Activated naive CD4-positive, alpha-beta T cell treated with anti-CD3 and anti-CD28 coated beads, Interleukin-2, amount 10 ng/mL, durations not matched to agents 7 days and 5 days (primary cell): ENCODE measurements at regions of chr3 and their contacts with region 1.

Region 1: DNA sequence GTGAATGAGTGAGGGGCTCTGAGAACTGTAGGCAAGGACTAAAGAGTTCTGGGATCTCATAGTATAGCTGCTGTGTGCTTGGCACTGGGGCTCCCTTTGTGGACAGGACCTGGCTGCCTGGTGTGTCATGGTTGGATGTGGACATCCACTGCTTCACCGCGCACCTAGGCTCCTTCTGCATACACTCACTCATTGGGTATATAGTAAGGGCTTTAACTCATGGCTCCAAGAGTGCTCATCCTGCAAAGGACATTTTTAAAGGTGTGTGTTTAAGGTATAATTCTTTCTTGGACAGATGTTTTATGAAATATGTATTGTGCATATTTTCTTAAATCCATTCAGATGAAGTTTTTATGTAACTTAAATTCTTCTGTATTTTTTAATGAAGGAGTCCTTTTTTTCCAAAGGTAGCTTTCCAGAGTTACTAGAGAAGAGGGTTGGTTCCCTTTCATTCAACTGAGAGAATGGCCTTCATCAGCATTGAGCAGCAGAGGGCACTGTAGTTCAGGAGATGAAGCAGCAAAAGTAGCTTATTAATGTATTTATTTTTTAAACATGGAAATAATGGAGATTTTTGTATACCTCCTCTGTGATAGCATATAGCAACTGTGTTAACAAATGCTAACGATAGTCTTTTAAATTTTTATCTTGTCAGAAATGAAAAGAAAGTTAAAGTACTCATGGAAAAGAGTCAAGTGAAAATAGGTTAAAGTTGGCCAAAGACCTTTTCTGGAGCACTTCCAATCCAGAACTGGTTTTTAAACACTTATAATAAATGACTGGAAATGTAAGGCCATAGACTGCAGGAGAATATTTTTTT is 25.2 kb downstream of the OXNAD1 start:
- DNase-seq: peak; percentile 80
- H3K4me3 Mint-ChIP-seq: peak overlapping the region; percentile 92
- H3K27ac Mint-ChIP-seq: peak overlapping the region; percentile 97
- H3K4me1 Mint-ChIP-seq: peaks cover 68% of the 10 kb centered on the region
- H3K27me3 Mint-ChIP-seq: no peaks in the 10 kb centered on the region

Region 2: GRCh38 chr3:16140116-16140893 is 149.9 kb before region 1 on chr3:
- CTCF ChIA-PET with region 1: no interaction called
- DNase-seq: no peak
- H3K4me3 Mint-ChIP-seq: no peak overlapping the region
- H3K27ac Mint-ChIP-seq: no peak overlapping the region
- H3K4me1 Mint-ChIP-seq: no peaks in the 10 kb centered on the region
- H3K27me3 Mint-ChIP-seq: peaks cover 9% of the 10 kb centered on the region

Region 3: GRCh38 chr3:16264708-16265454 is 25.3 kb before region 1 on chr3 and contains the starts of genes DPH3 and OXNAD1:
- CTCF ChIA-PET with region 1: interaction called, 21 read pairs
- DNase-seq: peak; percentile 99
- H3K4me3 Mint-ChIP-seq: peak within 1 kb of the TSS; percentile 97
- H3K27ac Mint-ChIP-seq: peak within 1 kb of the TSS; percentile 96
- H3K4me1 Mint-ChIP-seq: peaks cover 39% of the 10 kb centered on the region
- H3K27me3 Mint-ChIP-seq: no peaks in the 10 kb centered on the region

Region 4: GRCh38 chr3:16300881-16301359 is 10.7 kb after region 1 on chr3:
- CTCF ChIA-PET with region 1: interaction called, 53 read pairs
- DNase-seq: peak; percentile 73
- H3K4me3 Mint-ChIP-seq: peak overlapping the region; percentile 83
- H3K27ac Mint-ChIP-seq: peak overlapping the region; percentile 96
- H3K4me1 Mint-ChIP-seq: peaks cover 98% of the 10 kb centered on the region
- H3K27me3 Mint-ChIP-seq: no peaks in the 10 kb centered on the region

Region 5: DNA sequence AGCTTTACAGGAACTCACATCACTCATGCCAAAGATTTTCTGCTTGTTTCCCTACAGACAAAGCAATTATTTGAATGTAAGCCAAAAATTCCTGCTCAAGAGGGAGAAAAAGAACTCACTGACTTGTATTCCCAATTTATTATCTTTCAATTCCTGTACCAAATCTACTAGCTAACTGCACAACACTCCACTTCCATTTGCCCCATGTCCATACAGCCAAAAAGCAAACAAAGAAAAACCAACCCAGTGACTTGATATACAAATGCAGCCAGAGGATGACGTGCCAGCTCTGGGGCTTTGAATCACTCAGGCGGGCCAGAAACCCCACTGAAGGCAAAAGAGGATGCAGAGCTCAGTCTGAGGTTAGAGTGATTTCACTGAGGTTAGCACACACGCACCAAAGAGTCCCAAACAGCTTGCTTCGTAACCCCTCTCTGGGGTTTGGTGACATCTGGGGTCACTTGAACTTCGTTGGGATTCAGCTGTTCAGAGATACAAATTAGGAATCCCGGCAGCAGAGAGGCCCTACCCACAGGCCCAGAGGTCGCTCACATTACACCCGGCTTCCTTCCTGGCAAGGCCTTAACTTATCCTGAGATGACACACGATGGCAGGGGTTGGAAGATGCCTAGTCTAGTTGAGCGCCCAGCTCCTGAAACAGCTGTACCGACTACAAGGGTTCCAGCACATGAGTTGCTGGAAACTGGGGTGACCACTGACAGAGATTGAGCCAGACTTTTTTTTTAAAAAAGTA is 221.6 kb after region 1 on chr3:
- CTCF ChIA-PET with region 1: interaction called, 16 read pairs
- DNase-seq: peak; percentile 82
- H3K4me3 Mint-ChIP-seq: peak overlapping the region; percentile 89
- H3K27ac Mint-ChIP-seq: peak overlapping the region; percentile 97
- H3K4me1 Mint-ChIP-seq: peaks cover 76% of the 10 kb centered on the region
- H3K27me3 Mint-ChIP-seq: no peaks in the 10 kb centered on the region

Region 6: DNA sequence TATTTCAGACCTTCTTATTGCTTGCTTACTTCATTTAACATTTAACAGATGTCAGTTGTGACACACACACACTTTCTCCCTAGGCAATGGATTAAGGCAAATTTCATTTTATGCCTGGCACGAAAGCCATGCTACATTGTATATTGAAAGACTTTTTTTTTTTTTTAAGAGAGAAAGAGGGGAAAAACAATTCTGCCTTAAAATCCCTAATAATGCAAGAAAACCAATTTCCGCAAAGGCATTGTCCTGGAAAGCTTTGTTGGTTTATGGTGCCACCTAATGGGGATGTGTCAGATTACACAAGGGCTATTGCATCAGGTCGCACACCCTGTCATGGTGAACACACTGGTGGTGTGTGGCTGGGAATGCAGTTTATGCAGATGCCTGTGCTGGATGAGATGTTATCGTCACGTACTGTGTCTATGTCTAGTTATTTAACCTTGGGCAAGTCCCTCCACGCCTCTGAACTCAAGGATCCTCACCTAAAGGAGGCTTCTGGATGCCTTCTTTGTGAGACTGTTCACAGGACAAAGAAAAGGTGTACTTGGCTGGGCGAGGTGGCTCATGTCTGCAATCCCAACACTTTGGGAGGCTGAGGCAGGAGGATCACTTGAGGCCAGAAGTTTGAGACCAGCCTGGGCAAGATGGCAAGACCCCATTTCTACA is 260.6 kb after region 1 on chr3:
- CTCF ChIA-PET with region 1: interaction called, 36 read pairs
- DNase-seq: peak; percentile 82
- H3K4me3 Mint-ChIP-seq: no peak overlapping the region
- H3K27ac Mint-ChIP-seq: peak overlapping the region; percentile 39
- H3K4me1 Mint-ChIP-seq: peaks cover 10% of the 10 kb centered on the region
- H3K27me3 Mint-ChIP-seq: peaks cover 34% of the 10 kb centered on the region